Right cardiac atrium (tissue), 5 donors: ENCODE measurements at regions of chr5 and their contacts with region 1.

Region 1: DNA sequence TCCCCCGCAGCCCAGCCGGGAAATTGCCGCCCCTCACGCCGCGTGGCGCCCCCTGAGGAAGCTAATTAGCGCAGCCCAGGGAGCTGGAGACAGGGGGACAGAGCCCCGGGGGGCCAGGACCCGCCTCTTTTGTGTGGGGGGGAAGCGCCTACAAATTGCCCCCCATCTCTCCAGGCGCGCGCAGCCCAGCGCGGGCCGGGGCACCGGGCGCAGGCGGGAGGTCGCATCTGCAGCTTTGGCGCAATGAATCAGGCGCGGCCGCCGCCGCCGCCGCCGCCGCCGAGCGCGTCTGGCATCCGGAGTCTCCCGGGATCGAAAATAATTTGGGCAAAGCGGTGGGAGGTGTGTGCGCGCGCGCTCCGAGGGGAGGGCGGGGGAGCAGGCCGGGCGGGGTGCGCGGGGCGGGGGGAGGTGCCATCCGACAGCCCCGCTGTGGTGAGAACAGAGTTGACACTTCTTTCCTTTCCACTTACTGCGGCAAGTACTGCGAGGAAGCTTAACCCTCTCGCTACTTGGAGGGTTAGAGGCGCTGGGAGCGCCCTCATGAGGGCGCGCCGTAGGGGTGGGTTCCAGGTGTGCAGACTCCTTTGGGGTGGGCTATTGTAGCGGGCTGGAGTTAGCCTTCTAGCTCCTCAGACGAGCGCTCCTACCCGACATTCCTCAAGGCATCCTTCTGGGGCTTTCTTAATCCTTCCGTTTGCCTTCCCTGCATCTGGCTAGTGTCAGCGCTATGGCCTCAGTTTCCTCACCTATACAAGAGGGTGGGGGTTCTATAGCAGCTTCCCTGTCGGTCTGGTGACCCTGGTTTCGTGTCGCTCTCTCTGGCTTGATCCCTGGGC is 63.1 kb downstream of the CXXC5 start:
- DNase-seq: peak; percentile 64 to 86 (median 79)
- ATAC-seq: peak; percentile 33 to 50
- H3K4me3 ChIP-seq: peak overlapping the region; percentile 46
- H3K27ac ChIP-seq: peak overlapping the region; percentile 29
- H3K4me1 ChIP-seq: peaks cover 11% of the 10 kb centered on the region
- H3K27me3 ChIP-seq: no peaks in the 10 kb centered on the region

Region 2: DNA sequence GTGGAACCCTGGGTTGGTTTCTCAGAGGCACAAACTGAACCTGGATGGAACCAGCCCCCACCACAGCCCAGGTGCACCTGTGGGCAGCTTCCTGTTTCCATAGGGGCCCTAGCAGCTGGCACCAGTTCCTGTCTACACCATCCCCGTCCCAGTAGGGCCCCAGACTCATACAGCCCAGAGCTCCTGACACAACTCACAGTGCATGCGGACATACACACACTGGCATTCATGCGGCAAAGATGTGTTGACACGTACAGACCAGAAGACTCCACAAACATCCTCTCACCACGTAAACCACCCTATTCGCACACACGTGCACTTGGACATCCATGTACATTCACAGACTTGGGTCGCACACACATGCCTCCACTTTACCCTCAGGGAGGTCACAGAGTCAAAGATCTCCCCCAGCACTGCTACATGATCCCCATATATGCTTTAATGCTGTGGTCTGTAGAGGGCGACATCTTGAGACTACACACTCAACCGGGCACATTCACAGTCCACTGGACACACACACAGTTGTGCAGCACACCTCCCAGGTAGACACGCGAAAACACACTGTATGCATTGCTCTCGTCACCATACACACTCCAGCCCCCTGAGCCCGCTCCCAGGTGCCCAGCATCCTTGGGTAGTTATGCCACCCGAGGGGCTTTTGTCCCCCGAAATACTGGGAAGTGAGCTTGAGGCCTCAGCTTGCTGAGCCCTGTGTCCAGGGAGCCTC is 40.8 kb before region 1 on chr5:
- intact Hi-C with region 1: no loop called
- DNase-seq: peak in 1 of 3 donors; percentile 56
- ATAC-seq: peak in 1 of 2 donors; percentile 2
- H3K4me3 ChIP-seq: no peak overlapping the region
- H3K27ac ChIP-seq: peak overlapping the region; percentile 95
- H3K4me1 ChIP-seq: peaks cover 21% of the 10 kb centered on the region
- H3K27me3 ChIP-seq: no peaks in the 10 kb centered on the region

Region 3: GRCh38 chr5:139745800-139746690 is 34.8 kb after region 1 on chr5:
- intact Hi-C with region 1: loop called in 1 of 4 experiments (anchors 5 kb)
- DNase-seq: peak; percentile 78 to 85 (median 84)
- ATAC-seq: peak; percentile 75 to 76
- H3K4me3 ChIP-seq: peak overlapping the region; percentile 34
- H3K27ac ChIP-seq: no peak overlapping the region
- H3K4me1 ChIP-seq: peaks cover 5% of the 10 kb centered on the region
- H3K27me3 ChIP-seq: no peaks in the 10 kb centered on the region